GM12878 (cell line): ENCODE measurements at regions of chr19 and their contacts with region 1.

Region 1: DNA sequence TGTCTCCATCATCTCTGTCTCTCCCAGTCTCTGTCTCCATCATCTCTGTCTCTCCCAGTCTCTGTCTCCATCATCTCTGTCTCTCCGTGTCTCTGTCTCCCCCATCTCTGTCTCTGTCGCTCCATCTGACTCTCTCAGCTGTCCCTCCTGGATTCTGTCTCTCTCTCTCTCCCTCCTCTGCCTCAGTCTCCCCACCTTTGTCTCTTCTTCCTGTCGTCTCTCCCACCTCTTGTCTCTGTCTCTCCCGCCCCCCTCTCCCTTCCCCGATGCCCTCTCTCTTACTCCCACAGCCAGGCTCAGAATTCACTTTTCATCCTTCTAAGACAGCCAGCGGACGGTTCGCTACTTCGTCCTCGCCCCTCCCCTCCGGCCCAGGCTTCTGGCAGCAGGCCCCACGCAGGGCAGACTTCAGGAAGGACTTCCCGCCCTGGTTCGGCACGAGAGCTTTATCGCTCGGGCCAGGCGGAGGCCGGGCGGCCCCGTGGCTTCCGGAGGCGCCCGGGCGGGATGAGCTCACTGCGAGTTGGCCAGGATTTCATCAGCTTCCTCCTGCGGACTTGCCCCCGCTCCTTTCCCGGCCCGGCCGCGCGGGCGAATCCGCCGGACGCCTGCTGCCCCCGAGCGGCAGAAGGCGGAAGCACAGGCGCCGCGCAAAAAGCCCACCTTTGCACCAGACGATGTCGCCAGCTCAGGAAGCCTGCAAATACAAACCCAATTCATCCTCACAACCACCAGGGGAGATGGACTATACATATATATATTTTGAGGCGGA is 12.4 kb upstream of the CCDC9 start:
- DNase-seq: no peak
- ATAC-seq: peak; percentile 94
- H3K4me3 ChIP-seq: peak overlapping the region; percentile 54
- H3K27ac ChIP-seq: peak overlapping the region; percentile 65
- H3K4me1 ChIP-seq: peaks cover 29% of the 10 kb centered on the region
- H3K27me3 ChIP-seq: peaks cover 1 to 4% of the 10 kb centered on the region in 2 experiments
- CTCF ChIP-seq: peak; percentile 93 to 99 (median 95); a peak in 5 of 6 replicates
- EP300 ChIP-seq: no peak; a peak in 1 of 4 replicates
- POLR2A ChIP-seq: peak; percentile 85
- RAD21 ChIP-seq: peak; percentile 95

Region 2: DNA sequence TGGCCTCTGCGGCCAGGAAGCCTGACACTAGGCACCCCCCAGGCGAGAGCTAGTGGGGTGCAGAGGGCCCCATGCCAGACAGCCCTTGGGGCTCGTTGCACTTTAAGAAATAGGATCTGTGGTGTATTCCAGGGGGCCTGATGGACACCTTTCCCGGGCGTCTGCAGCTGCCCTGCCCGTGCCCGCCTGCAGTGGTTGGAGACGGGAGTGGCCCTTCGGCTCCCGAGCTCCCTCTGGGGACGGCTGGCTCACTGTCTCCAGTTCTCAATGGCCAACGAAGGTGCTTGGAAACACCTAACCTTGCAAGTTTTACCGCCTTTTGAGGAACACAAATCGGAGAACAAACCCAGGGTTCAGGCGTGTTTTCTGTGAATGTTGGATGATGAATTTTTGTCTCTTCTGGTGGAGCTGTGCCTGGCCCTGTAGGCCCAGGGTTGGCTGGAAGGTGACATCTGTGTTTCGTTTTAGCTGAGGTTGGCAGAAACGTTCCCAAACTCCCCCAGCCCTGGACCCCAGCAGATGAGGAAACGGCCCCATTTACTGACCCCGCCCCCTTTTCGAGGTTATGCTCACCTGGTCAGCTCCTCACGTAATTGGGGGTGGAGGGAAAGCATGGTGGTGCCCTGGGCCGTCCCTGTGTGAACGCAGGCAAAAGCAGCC is 241.7 kb before region 1 on chr19:
- CTCF ChIA-PET with region 1: no interaction called
- POLR2A ChIA-PET with region 1: no interaction called
- RAD21 ChIA-PET with region 1: no interaction called
- SMC1A ChIA-PET with region 1: no interaction called
- in situ Hi-C with region 1: no loop called
- intact Hi-C with region 1: no loop called
- DNase-seq: no peak
- ATAC-seq: no peak
- H3K4me3 ChIP-seq: no peak overlapping the region
- H3K27ac ChIP-seq: no peak overlapping the region
- H3K4me1 ChIP-seq: no peaks in the 10 kb centered on the region
- H3K27me3 ChIP-seq: no peaks in the 10 kb centered on the region
- CTCF ChIP-seq: no peak
- EP300 ChIP-seq: no peak
- POLR2A ChIP-seq: no peak
- RAD21 ChIP-seq: no peak

Region 3: DNA sequence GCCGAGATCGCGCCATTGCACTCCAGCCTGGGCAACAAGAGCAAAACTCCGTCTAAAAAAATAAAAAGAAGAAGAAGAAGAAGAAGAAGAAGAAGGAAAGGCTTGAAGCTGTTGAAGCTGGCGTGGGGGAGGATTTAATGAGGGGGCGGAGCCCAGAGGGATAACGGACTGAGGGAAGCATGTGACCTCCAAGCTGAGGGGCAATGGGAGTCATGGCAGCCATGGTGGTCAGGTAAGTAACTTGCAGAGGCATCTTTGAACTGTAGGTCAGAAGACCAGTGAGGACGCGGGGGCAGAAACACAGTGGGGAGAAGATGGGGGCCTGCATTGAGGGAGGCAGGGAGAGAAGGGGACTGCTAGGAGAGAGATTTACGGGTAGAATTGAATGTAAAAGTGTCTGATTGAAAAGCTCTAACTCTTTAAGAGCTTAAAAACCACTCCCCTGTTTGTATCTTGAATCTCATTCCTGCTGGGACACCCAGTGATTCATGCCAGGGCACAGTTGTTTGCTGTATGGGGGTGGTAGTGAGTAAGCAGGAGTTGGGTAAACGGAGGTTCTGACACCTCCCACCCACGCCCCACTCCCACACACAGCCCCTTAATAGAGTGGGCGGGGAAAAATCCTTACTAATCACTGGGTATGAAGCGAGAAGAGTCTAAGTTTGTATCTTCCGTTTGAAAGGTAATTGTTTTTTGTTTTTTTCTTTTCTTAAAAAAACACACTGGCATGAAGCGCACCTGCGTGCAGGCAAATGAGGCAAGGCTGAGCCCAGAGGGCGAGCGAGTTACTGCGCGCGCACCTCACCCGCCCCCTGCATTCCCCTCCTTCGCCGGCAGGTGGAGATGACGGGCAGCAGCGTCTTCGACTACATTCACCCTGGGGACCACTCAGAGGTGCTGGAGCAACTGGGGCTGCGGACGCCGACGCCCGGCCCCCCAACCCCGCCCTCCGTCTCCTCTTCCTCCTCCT is 208.6 kb before region 1 on chr19:
- CTCF ChIA-PET with region 1: interaction called, 16 read pairs
- POLR2A ChIA-PET with region 1: interaction called, 4 read pairs
- RAD21 ChIA-PET with region 1: interaction called, 4 read pairs
- SMC1A ChIA-PET with region 1: interaction called, 6 read pairs
- in situ Hi-C with region 1: no loop called
- intact Hi-C with region 1: loop called (anchors 10 kb)
- DNase-seq: peak; percentile 77
- ATAC-seq: peak; percentile 95
- H3K4me3 ChIP-seq: peak overlapping the region; percentile 77
- H3K27ac ChIP-seq: no peak overlapping the region
- H3K4me1 ChIP-seq: peaks cover 6% of the 10 kb centered on the region; the same call in 1 of the 2 replicates
- H3K27me3 ChIP-seq: no peaks in the 10 kb centered on the region; a peak in 1 of 4 replicates
- CTCF ChIP-seq: peak; percentile 95 to 97 (median 96)
- EP300 ChIP-seq: no peak
- POLR2A ChIP-seq: peak; percentile 50
- RAD21 ChIP-seq: peak; percentile 54; the same call in 1 of the 2 replicates

Region 4: DNA sequence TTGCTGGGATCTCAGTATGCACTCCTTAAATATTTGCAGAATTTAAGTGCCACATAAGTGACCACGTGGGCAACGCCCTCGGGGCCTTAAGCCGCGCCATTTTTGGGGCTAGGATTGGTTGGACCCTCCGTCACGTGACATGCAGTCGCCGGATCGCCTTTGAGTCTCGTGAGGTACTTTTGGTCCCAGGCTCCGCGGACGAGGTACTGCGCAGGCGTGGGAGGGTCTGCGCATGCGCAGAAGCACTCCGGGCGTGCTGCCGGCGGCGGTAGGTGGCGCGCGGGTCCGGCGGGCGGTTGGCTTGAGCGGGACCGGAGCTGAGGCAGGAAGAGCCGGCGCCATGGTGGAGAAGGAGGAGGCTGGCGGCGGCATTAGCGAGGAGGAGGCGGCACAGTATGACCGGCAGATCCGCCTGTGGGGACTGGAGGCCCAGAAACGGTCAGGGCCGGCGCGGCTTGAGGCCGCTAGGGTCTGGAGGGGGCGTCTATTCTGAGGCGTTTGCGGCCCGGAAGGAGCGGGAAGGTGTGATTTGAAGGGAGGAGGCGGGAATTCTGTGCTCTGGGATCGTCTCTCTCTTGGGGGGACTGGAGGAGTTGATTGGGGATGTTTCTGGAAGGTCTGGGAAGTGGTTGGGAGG is 113.3 kb before region 1 on chr19 and contains the start of gene SAE1:
- CTCF ChIA-PET with region 1: interaction called, 32 read pairs
- POLR2A ChIA-PET with region 1: interaction called, 13 read pairs
- RAD21 ChIA-PET with region 1: interaction called, 26 read pairs
- SMC1A ChIA-PET with region 1: interaction called, 19 read pairs
- in situ Hi-C with region 1: no loop called
- intact Hi-C with region 1: loop called (anchors 1 kb)
- DNase-seq: peak; percentile 95
- ATAC-seq: peak; percentile 92
- H3K4me3 ChIP-seq: peak within 1 kb of the TSS; percentile 94
- H3K27ac ChIP-seq: peak within 1 kb of the TSS; percentile 90
- H3K4me1 ChIP-seq: peaks cover 3% of the 10 kb centered on the region; the same call in 1 of the 2 replicates
- H3K27me3 ChIP-seq: no peaks in the 10 kb centered on the region
- CTCF ChIP-seq: peak; percentile 53 to 81 (median 56); a peak in 5 of 6 replicates
- EP300 ChIP-seq: no peak
- POLR2A ChIP-seq: peak; percentile 94
- RAD21 ChIP-seq: no peak; the same call in 1 of the 2 replicates
- polyA plus RNA-seq, gene SAE1: 62.0 to 90.0 TPM

Region 5: DNA sequence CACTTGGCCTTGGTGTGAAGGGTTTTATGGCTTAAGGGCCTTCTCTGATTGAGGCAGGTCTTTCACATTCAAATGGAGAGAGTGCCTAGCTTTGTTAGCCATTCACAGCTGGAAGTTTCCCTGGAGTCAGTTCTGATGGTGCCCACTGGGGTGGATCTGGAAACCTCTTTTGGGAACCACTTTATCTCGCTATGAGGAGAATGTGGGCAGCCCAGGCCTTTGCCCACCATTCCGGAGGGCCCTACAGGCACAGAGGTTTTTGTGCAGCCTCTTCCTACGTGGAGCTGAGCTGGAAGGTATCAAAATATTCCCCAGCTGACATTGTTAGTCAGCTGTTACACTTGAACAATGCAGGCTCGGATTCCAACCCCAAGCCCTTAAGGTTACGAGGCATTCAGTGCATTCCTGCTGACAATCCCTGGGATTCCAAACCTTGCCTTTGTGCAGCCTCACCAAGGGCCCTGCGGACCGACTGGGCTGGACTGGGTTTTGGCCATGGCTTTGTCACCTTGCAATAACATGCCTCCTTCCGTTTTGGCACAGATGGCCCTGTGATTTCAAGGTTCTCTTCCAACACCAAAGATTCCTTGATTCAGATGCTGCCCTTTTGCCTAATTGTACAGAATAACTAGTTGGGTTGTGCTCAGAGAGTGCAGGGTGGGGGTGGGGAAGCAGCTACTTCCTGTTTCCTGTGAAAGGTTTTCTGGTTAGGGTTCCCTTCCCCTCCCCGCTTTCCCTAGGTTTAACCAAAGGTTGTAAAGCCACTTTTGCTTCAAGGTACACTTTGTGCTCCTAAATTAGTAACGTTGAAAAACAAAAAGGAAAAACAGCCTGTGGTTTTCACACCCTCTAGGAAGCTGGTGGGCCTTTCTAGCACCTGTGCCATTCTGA is 86.3 kb before region 1 on chr19:
- CTCF ChIA-PET with region 1: interaction called, 41 read pairs
- POLR2A ChIA-PET with region 1: no interaction called
- RAD21 ChIA-PET with region 1: interaction called, 15 read pairs
- SMC1A ChIA-PET with region 1: interaction called, 14 read pairs
- in situ Hi-C with region 1: no loop called
- intact Hi-C with region 1: no loop called
- DNase-seq: no peak
- ATAC-seq: peak; percentile 62
- H3K4me3 ChIP-seq: no peak overlapping the region
- H3K27ac ChIP-seq: peak overlapping the region; percentile 8
- H3K4me1 ChIP-seq: peaks cover 24% of the 10 kb centered on the region
- H3K27me3 ChIP-seq: no peaks in the 10 kb centered on the region
- CTCF ChIP-seq: no peak
- EP300 ChIP-seq: no peak
- POLR2A ChIP-seq: no peak
- RAD21 ChIP-seq: no peak

Region 6: GRCh38 chr19:47203254-47203653 is 40.7 kb before region 1 on chr19:
- CTCF ChIA-PET with region 1: interaction called, 21 read pairs
- POLR2A ChIA-PET with region 1: interaction called, 5 read pairs
- RAD21 ChIA-PET with region 1: interaction called, 255 read pairs
- SMC1A ChIA-PET with region 1: interaction called, 211 read pairs
- in situ Hi-C with region 1: no loop called
- intact Hi-C with region 1: no loop called
- DNase-seq: no peak
- ATAC-seq: no peak
- H3K4me3 ChIP-seq: no peak overlapping the region
- H3K27ac ChIP-seq: no peak overlapping the region
- H3K4me1 ChIP-seq: no peaks in the 10 kb centered on the region
- H3K27me3 ChIP-seq: no peaks in the 10 kb centered on the region
- CTCF ChIP-seq: no peak
- EP300 ChIP-seq: no peak
- POLR2A ChIP-seq: no peak
- RAD21 ChIP-seq: no peak

Region 7: DNA sequence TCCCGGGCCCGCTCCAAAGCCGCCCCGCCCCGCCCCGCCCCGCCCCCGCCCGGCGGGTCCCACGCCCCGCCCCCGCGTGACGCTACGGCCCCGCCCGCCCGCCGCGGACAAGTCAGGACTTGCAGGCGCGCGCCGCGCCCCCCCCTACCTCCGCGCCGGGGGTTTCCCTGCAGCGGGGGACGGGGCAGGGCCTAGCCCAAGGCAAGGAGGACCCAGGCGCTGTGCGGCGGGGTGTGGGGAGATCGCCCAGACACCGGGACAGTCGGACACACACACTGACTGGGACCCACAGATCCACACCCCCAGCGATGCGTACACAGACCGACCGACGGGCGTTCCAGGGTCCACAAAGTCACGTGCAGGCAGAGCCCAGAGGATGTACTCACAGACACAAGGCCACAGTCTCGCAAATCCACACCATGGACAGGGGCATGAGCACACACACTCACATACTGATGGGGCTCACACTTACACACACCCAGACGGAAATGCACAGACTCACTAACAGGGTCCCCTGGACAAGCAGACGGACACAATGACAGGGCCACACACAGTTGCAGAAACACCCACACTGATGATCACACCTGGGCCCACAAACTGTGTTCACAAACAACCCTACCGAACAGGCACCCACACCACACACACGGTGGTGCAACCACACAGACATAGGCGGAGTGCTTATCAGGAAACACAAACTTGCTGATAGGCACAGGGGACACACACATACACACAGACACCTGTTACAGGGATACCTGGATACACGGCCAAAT is 12.6 kb before region 1 on chr19:
- CTCF ChIA-PET with region 1: interaction called, 65 read pairs
- POLR2A ChIA-PET with region 1: interaction called, 17 read pairs
- RAD21 ChIA-PET with region 1: interaction called, 37 read pairs
- SMC1A ChIA-PET with region 1: interaction called, 17 read pairs
- in situ Hi-C with region 1: no loop called
- intact Hi-C with region 1: loop called (anchors 1 kb)
- DNase-seq: peak; percentile 54
- ATAC-seq: peak; percentile 24
- H3K4me3 ChIP-seq: peak overlapping the region; percentile 62; the same call in 1 of the 2 replicates
- H3K27ac ChIP-seq: peak overlapping the region; percentile 88
- H3K4me1 ChIP-seq: peaks cover 44% of the 10 kb centered on the region
- H3K27me3 ChIP-seq: no peaks in the 10 kb centered on the region
- CTCF ChIP-seq: no peak
- EP300 ChIP-seq: 0 out of 4 replicates have a peak, but pooled peaks of 1 of the 2 experiments have one; percentile 54
- POLR2A ChIP-seq: peak; percentile 92
- RAD21 ChIP-seq: no peak

Region 8: GRCh38 chr19:47315125-47315821 is 71.3 kb after region 1 on chr19:
- CTCF ChIA-PET with region 1: no interaction called
- POLR2A ChIA-PET with region 1: no interaction called
- RAD21 ChIA-PET with region 1: no interaction called
- SMC1A ChIA-PET with region 1: no interaction called
- in situ Hi-C with region 1: no loop called
- intact Hi-C with region 1: no loop called
- DNase-seq: no peak
- ATAC-seq: peak; percentile 82
- H3K4me3 ChIP-seq: no peak overlapping the region
- H3K27ac ChIP-seq: no peak overlapping the region
- H3K4me1 ChIP-seq: no peaks in the 10 kb centered on the region
- H3K27me3 ChIP-seq: no peaks in the 10 kb centered on the region
- CTCF ChIP-seq: no peak
- EP300 ChIP-seq: no peak
- POLR2A ChIP-seq: no peak
- RAD21 ChIP-seq: no peak